ENCODE measurements at regions of chr1 and their contacts with region 1.

Region 1: GRCh38 chr1:25037174-25038074 is 107.3 kb upstream of the RUNX3 start:
- DNase-seq: peak in 2 of 3 donors; percentile 74 to 75
- H3K4me3 ChIP-seq: no peak overlapping the region
- H3K27ac ChIP-seq: no peak overlapping the region
- H3K4me1 ChIP-seq: peaks cover 16 to 57% (median 54%) of the 10 kb centered on the region in 4 experiments
- H3K27me3 ChIP-seq: no peaks in the 10 kb centered on the region

Region 2: GRCh38 chr1:24935615-24936484 is 101.6 kb before region 1 on chr1:
- CTCF ChIA-PET with region 1: interaction called, 24 read pairs
- POLR2A ChIA-PET with region 1: interaction called, 3 read pairs
- DNase-seq: no peak
- H3K4me3 ChIP-seq: no peak overlapping the region
- H3K27ac ChIP-seq: no peak overlapping the region
- H3K4me1 ChIP-seq: peaks cover 0 to 42% (median 13%) of the 10 kb centered on the region in 4 experiments
- H3K27me3 ChIP-seq: no peaks in the 10 kb centered on the region

Region 3: DNA sequence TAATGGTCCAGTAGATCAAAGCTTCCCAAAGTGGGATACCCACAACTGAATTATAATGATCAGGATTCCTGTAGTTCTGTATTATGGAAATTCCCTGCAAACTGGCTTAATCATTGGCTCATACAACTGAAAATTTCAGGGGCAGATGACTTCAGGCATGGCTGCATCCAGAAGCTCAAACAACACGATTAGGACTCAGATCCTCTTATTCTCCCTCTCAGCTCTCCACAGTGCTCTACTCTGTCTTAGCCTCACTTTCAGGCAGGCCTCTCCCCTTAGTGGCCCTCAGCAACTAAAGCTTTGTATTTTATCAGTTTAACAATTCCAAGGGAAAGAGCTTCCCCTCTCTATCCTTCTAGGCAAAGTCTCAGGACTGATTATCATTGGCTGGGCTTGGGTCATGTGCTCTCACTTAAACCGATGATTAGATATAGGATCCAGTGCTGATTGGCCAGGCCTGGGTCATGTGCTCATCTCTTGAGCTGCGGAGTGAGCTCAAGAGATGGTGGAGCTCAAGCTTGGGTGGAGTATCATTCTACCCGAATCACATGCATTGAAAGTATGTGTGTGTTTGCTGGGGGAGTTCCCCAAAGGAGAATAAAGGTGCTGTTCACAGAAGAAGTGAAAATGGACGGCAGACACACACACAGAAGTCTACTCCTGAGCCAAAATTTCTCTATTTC is 49.4 kb before region 1 on chr1:
- CTCF ChIA-PET with region 1: interaction called, 22 read pairs
- POLR2A ChIA-PET with region 1: interaction called, 4 read pairs
- DNase-seq: no peak
- H3K4me3 ChIP-seq: no peak overlapping the region
- H3K27ac ChIP-seq: no peak overlapping the region
- H3K4me1 ChIP-seq: peaks cover 0 to 66% (median 24%) of the 10 kb centered on the region in 4 experiments
- H3K27me3 ChIP-seq: no peaks in the 10 kb centered on the region

Region 4: GRCh38 chr1:25011943-25012638 is 25.3 kb before region 1 on chr1:
- CTCF ChIA-PET with region 1: interaction called, 14 read pairs
- POLR2A ChIA-PET with region 1: no interaction called
- DNase-seq: no peak
- H3K4me3 ChIP-seq: no peak overlapping the region
- H3K27ac ChIP-seq: no peak overlapping the region
- H3K4me1 ChIP-seq: peaks cover 0 to 69% (median 10%) of the 10 kb centered on the region in 4 experiments
- H3K27me3 ChIP-seq: no peaks in the 10 kb centered on the region

Region 5: DNA sequence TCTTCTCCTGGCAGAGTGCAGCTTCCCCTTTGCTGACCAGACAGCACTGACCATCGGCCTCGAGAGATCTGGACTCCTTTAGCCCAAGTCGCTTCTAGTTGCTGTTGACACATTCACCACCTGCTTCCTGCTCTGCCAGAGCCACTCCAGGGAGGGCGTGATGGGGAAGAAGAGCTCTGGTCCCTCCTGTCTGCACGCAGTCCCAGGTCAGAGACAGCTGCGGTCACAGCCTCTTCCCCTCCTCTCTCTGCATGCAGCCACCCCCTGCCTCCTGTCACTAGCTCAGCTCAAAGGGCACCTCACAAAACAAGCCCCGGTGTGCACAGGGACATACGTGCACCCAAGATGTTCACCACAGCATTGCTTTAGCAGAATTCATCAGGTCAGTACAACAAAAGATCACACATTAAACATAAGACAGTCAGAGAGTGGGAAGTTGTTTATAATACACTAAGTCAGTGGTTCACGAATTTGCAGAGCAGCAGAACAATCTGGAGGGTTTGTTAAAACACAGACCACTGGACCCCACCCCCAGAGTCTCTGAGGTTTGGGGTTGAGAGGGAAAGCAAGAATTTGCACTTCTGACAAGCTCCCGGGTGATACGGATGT is 62.0 kb after region 1 on chr1:
- CTCF ChIA-PET with region 1: interaction called, 13 read pairs
- POLR2A ChIA-PET with region 1: interaction called, 4 read pairs
- DNase-seq: peak in 2 of 3 donors; percentile 76 to 81
- H3K4me3 ChIP-seq: peak overlapping the region in 1 of 7 experiments; percentile 19
- H3K27ac ChIP-seq: no peak overlapping the region
- H3K4me1 ChIP-seq: peaks cover 13 to 88% (median 38%) of the 10 kb centered on the region in 4 experiments
- H3K27me3 ChIP-seq: no peaks in the 10 kb centered on the region

Region 6: DNA sequence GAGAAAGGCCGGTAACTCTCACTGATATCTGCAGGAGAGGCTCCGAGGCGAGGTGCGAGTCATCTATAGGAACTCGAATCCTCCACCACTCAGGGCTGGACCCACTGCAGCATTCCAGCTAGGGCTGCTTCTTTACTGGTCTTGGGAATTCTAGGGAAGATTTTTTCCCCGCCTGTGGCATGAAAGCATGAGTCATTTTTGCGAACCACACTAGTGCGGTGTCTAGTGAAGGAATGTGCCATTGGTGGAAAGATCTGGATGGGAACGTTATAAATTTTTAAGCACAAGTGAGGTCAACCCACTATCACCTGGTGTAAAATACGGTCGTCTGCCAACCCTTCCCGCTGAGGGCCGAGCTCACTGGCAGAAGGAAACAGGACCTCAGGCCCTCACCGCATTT is 145.2 kb after region 1 on chr1:
- CTCF ChIA-PET with region 1: no interaction called
- POLR2A ChIA-PET with region 1: no interaction called
- DNase-seq: no peak
- H3K4me3 ChIP-seq: no peak overlapping the region
- H3K27ac ChIP-seq: no peak overlapping the region
- H3K4me1 ChIP-seq: peaks cover 0 to 9% (median 3%) of the 10 kb centered on the region in 4 experiments
- H3K27me3 ChIP-seq: no peaks in the 10 kb centered on the region

Measured in common myeloid progenitor, CD34-positive (primary cell).